A549 (cell line): ENCODE measurements at regions of chr19 and their contacts with region 1.

Region 1: GRCh38 chr19:14517840-14518505 is at the start of gene DNAJB1:
- DNase-seq: peak; percentile 64 to 75
- ATAC-seq: peak; percentile 77 to 79
- H3K4me3 ChIP-seq: peak within 1 kb of the TSS; percentile 100
- H3K27ac ChIP-seq: peak within 1 kb of the TSS; percentile 99 to 100
- H3K4me1 ChIP-seq: peaks cover 66% of the 10 kb centered on the region
- CTCF ChIP-seq: no peak
- EP300 ChIP-seq: no peak
- POLR2A ChIP-seq: peak; percentile 99
- RAD21 ChIP-seq: no peak
- polyA plus RNA-seq, gene DNAJB1: 124 and 126 TPM in 2 replicates

Region 2: GRCh38 chr19:14450168-14450874 is 67.7 kb before region 1 on chr19:
- CTCF ChIA-PET with region 1: no interaction called
- POLR2A ChIA-PET with region 1: no interaction called
- DNase-seq: peak; percentile 56 to 84
- ATAC-seq: peak; percentile 82 to 96; a peak in 5 of 6 replicates
- H3K4me3 ChIP-seq: no peak overlapping the region
- H3K27ac ChIP-seq: no peak overlapping the region
- H3K4me1 ChIP-seq: no peaks in the 10 kb centered on the region
- CTCF ChIP-seq: no peak
- EP300 ChIP-seq: no peak
- POLR2A ChIP-seq: no peak
- RAD21 ChIP-seq: no peak

Region 3: GRCh38 chr19:14496028-14496833 is 21.7 kb before region 1 on chr19 and contains the start of gene GIPC1:
- CTCF ChIA-PET with region 1: interaction called, 3 read pairs
- POLR2A ChIA-PET with region 1: interaction called, 31 read pairs
- DNase-seq: peak; percentile 96 to 98
- ATAC-seq: peak; percentile 93
- H3K4me3 ChIP-seq: peak within 1 kb of the TSS; percentile 68
- H3K27ac ChIP-seq: peak within 1 kb of the TSS; percentile 89 to 99
- H3K4me1 ChIP-seq: peaks cover 28% of the 10 kb centered on the region
- CTCF ChIP-seq: no peak
- EP300 ChIP-seq: no peak
- POLR2A ChIP-seq: no peak
- RAD21 ChIP-seq: no peak
- polyA plus RNA-seq, gene GIPC1: 41.4 and 52.9 TPM in 2 replicates

Region 4: DNA sequence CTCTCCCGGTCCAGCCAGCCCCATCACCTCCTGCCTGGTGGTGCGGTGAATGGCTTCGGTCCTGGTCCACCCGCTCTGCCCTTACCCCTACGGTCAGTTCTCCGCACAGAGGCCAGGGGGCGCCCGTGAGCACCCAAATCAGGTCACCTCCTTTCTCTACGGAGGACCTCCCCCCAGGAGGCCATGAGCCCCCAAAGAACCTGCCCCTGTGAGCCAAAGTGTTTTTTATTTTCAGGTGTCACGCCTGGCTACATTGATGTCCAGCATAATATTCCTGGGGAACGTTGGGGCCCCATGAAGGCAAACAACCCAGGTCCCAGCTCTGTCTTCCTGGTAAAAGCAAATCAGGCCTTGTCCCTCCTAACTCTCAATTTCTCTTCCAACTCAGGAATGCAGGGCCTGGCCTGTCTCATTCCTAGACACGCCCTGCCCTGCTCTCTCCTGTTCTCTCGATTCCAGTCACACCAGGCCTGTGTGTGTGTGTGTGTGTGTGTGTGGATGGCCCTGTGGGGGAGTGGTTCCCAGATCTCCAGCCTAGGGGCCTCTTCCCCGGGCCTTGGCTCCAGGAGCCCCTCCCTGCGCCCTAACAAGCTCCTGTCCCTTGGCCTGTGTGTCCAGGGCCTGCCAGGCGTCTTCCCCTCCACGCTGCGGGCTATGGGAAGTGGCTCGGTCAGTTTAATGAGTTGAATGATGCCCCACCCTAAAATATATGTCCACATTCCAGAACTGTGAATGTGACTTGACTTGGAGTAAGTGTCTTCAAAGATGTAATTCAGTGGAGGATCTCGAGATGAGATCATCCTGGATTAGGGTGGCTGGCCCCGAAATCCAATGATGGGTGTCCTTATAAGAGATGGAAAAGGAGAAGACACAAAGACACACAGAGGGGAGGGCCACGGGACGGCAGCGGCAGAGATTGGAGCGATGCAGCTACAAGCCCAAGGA is 12.2 kb before region 1 on chr19:
- CTCF ChIA-PET with region 1: interaction called, 17 read pairs
- POLR2A ChIA-PET with region 1: interaction called, 112 read pairs
- DNase-seq: peak; percentile 68 to 95
- ATAC-seq: peak; percentile 79 to 80
- H3K4me3 ChIP-seq: peak overlapping the region; percentile 35; the same call in 1 of the 3 replicates
- H3K27ac ChIP-seq: peak overlapping the region; percentile 94 to 100
- H3K4me1 ChIP-seq: peaks cover 73% of the 10 kb centered on the region
- CTCF ChIP-seq: peak; percentile 61
- EP300 ChIP-seq: peak in 1 of 2 experiments; percentile 24; a peak in 1 of 5 replicates
- POLR2A ChIP-seq: no peak
- RAD21 ChIP-seq: peak in 1 of 2 experiments; percentile 43; a peak in 2 of 5 replicates

Region 5: DNA sequence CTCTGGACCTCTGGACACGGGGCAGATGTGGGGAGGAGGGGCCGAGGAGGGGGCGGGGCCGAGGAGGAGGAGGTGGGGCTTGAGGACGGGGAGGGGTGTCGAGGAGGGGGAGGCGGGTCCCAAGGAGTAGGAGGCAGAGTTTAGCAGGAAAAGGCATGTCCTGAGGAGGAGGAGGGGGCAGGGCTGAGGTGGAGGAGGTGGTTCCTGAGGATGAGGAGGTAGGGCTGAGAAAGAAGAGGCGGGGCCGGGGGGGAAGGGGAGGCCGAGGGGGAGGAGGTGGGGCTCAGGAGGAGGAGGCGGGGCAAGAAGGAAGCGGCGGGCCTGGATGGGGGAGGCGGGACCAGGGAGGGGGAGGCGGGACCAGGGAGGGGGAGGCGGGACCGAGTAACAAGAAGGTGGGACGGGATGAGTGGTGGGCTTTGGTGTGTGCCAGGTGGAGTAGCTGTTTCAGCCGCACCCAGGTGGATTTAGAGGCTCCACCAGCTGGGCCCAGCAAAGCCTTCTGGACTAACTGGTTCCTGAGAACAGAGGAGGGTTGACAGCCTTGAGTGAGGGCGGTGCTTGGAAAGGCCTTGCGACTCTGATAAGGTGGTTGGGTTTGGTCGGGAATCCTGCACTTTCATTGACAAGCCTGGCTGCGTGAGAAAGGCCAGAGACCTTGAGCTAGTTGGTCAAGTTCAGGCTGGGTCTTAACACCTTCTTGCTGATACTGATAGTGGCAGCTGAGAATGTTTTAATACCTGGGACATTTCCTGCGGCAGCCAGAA is 19.1 kb after region 1 on chr19:
- CTCF ChIA-PET with region 1: no interaction called
- POLR2A ChIA-PET with region 1: interaction called, 11 read pairs
- DNase-seq: peak; percentile 51 to 90
- ATAC-seq: peak; percentile 88 to 90
- H3K4me3 ChIP-seq: no peak overlapping the region
- H3K27ac ChIP-seq: peak overlapping the region in 1 of 2 experiments; percentile 66; a peak in 3 of 6 replicates
- H3K4me1 ChIP-seq: peaks cover 12% of the 10 kb centered on the region; the same call in 2 of the 3 replicates
- CTCF ChIP-seq: no peak
- EP300 ChIP-seq: no peak
- POLR2A ChIP-seq: no peak
- RAD21 ChIP-seq: no peak